HEK293 (cell line): ENCODE measurements at regions of chr12 and their contacts with region 1.

Region 1: DNA sequence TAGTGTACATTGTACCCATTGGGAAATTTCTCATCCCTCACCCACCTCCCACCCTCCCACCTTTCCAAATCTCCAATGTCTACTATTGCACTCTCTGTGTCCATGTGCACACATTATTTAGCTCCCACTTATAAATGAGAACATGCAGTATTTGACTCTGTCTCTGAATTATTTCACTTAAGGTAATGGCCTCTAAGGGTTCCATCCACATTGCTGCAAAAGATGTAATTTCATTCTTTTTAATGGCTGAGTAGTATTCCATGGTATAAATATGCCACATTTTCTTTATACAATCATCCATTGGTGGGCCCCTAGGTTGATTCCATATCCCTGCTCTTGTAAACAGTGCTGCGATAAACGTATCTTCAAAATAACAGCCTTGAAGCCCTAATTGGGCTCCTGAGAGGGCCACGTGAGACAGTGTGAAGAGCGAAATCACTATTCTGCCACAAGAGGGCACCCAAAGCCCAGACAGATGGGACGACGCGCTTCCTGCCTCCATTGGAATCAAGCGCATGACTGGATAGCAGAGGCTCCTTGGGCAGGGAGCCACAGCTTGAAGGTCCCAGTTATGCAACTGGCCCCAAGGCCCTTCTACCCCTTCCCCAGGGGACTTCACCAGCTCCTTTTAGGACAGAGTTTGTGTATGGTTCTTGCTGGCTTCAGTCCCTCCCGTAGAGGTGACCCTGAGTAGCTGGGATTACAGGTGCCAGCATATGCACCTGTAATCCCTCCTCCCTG is 21.3 kb upstream of the CD27 start:
- H3K4me3 ChIP-seq: no peak overlapping the region
- H3K27ac ChIP-seq: no peak overlapping the region
- H3K4me1 ChIP-seq: no peaks in the 10 kb centered on the region
- CTCF ChIP-seq: peak; percentile 82

Region 2: DNA sequence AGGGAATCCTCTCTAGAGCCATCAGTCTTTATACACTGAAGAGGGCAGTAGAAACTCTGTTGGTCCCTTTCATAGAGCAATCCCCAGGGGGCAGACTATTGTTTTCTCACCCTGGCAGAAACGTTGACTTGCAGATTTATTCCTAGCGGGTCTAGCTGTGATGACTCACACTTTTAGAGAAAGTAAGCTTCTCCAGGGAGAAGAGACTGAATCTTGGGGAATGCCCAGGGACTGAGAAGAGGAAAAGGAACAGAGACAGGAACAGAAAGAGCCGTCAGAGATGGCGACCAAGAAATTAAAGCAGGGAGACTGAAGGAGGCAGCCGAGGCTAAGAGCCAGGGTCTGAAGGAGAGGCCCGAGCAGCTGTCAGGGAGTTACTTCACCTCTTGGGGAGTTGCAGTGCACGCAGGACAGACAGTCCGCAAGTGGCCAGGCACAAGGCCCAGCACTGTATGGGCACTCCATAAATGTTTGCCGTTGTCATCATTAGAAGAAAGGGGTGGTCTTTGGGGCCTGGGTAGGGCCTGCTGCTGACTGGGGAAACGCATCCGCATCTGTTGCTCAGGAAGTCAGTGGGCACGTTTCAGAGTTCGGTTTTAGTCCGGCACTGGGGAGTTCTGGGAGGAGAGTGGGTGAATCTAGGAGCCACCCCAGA is 100.0 kb before region 1 on chr12:
- CTCF ChIA-PET with region 1: interaction called, 14 read pairs
- POLR2A ChIA-PET with region 1: interaction called, 3 read pairs
- H3K4me3 ChIP-seq: no peak overlapping the region
- H3K27ac ChIP-seq: peak overlapping the region; percentile 55
- H3K4me1 ChIP-seq: peaks cover 11% of the 10 kb centered on the region
- CTCF ChIP-seq: peak; percentile 75

Region 3: GRCh38 chr12:6438345-6438744 is 14.9 kb after region 1 on chr12:
- CTCF ChIA-PET with region 1: interaction called, 13 read pairs
- POLR2A ChIA-PET with region 1: no interaction called
- H3K4me3 ChIP-seq: no peak overlapping the region
- H3K27ac ChIP-seq: no peak overlapping the region
- H3K4me1 ChIP-seq: no peaks in the 10 kb centered on the region
- CTCF ChIP-seq: no peak

Region 4: DNA sequence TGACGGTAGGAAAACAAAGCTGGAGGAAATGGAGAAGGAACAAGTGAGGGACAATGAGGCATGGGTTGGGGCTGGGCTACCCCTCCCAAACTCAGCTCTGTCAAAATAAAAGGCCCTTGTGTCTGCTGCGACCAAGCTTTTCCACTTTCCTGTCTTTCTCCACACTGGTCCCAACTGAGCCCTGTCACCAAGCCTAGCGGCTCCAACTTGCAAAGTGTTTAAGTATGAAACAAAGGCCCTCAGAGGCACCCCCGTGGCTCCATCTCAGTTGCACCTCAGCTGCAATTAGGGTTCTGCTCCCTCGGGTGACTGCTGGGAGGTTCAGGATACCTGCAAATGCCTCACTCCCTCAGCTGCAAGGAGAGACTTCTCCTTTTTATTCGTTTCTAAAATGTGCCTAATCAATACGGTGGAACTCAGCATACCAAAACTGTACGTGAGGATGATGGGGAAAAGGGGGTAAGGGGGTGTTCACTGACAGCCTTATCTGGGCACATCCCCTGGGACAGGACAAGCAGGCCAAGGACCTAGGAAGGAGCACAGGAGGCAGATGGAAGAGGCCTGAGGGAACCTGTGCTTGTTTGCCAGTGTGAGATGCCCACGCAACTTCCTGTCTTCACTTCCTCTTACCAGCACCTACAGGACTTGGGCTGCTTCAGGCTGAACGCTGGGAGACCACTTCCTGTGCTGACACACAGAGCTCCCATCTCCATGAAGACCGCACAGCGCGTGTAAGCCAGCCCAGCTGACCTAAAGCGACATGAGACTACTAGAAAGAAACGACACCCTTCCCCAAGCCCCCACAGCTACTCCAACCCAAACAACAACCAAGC is 38.2 kb after region 1 on chr12:
- CTCF ChIA-PET with region 1: interaction called, 73 read pairs
- POLR2A ChIA-PET with region 1: interaction called, 4 read pairs
- H3K4me3 ChIP-seq: no peak overlapping the region
- H3K27ac ChIP-seq: no peak overlapping the region
- H3K4me1 ChIP-seq: no peaks in the 10 kb centered on the region
- CTCF ChIP-seq: no peak

Region 5: GRCh38 chr12:6540181-6540877 is 116.9 kb after region 1 on chr12:
- CTCF ChIA-PET with region 1: interaction called, 14 read pairs
- POLR2A ChIA-PET with region 1: interaction called, 3 read pairs
- H3K4me3 ChIP-seq: no peak overlapping the region
- H3K27ac ChIP-seq: peak overlapping the region; percentile 38; the same call in 1 of the 2 replicates
- H3K4me1 ChIP-seq: peaks cover 4% of the 10 kb centered on the region; the same call in 1 of the 2 replicates
- CTCF ChIP-seq: no peak